HEK293T (cell line): ENCODE measurements at regions of chrX and their contacts with region 1.

Region 1: DNA sequence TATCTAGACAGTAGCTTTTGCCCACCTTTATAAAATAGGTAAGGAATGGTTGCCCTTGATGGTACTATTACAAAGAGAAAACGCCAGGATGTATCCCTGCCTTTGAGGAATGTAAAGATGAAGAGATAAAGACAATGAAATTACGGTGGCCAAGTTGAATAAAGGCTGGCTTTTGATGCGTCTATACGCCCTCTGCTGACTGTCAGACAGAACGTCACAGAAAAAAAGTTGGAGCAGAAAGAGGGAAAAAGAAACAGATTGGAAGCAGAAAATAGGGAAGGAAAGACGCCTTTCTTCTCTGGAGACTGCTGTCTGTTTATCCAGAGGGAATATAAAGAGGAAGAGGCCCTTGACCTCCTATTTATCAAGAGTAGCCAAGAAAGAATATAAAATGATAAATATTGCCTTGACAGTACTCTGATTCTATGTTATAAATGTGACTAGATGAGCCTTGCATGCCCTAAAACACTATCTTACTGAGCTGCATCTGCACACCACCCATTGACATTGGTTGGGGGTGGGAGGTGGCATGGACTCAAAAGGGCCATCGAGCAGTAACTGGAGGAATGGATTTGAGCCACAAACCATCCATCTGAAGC is 30.6 kb downstream of the PCDH19 start:
- DNase-seq: peak; percentile 40

Region 2: DNA sequence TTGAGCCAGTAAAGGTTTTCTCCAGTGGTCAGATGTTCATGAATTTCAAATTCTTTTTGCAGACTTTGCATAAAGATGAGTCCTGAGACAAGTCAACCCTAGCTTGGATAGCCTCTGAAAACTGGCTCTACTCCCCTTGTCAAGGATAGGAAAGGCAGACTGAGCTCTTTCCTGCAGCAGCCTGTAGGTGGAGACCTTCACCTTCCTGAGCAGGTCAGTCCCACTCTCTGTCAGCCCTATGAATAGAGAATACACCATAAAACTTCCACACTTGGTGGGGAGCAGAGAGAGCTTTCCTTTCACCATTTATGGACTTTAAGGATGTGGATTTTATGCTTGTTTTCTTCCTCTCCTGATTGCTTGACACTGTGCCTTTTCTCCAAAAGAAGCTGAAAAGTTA is 11.3 kb before region 1 on chrX:
- CTCF ChIA-PET with region 1: interaction called, 30 read pairs
- POLR2A ChIA-PET with region 1: no interaction called
- DNase-seq: peak; percentile 61

Region 3: DNA sequence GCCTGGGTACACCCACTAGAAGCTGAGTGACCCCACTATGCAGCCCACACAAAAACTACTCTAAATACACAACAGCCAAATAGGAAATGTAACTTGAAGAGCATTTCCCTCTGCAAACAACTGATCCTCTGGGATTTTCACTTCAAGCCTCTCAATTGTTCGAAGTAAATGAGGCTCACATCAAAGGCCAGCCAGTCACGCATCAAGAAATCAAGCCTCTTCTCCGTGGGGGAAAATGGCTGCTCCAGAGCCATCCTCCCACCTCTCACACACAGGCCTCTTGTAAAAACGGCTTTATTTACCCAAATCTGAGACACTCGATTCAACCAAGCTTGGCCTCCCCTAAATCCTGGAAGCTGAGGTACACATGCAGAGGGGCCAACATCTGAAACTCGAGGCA is 16.3 kb after region 1 on chrX:
- CTCF ChIA-PET with region 1: interaction called, 14 read pairs
- POLR2A ChIA-PET with region 1: no interaction called
- DNase-seq: no peak